Activated CD8-positive, alpha-beta T cell treated with anti-CD3 and anti-CD28 coated beads for 36 hours (primary cell): ENCODE measurements at regions of chr6 and their contacts with region 1.

Region 1: DNA sequence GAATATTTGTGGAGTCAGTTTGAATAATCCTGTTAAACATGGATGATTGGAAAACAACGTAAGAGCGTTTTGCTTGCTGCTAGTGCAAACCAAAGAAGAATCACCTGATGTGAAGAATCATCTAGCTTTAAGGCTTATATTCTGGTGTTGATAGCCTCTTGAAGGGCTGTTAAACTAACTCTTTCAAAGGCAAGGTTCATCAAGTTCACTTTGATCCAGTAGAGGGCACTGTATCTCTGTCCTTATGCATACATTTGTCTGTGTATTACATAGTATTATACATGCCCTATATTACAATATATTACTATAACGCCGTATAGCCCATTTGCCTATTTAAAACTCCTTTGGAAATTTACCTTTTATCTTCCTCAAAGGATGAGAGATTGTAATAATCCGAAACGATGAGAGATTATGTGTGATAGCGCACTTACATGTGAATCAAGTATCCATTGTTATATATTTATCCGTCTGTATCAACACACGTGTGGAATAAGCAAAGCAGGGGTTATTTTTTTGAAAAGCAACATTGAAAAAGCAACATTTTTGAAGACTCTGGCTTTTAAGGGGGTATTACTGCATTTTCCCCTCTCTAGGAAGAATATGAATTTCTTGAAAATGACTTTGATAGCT is 50.8 kb upstream of the NRN1 start:
- DNase-seq: no peak
- ATAC-seq: no peak
- H3K4me3 Mint-ChIP-seq: no peak overlapping the region
- H3K27ac Mint-ChIP-seq: no peak overlapping the region
- H3K4me1 Mint-ChIP-seq: no peaks in the 10 kb centered on the region
- H3K27me3 Mint-ChIP-seq: peaks cover 27% of the 10 kb centered on the region
- CTCF ChIP-seq: peak; percentile 58

Region 2: GRCh38 chr6:6105472-6106036 is 48.0 kb after region 1 on chr6:
- CTCF ChIA-PET with region 1: no interaction called
- POLR2A ChIA-PET with region 1: no interaction called
- intact Hi-C with region 1: no loop called
- DNase-seq: peak; percentile 9
- ATAC-seq: no peak
- H3K4me3 Mint-ChIP-seq: no peak overlapping the region
- H3K27ac Mint-ChIP-seq: no peak overlapping the region
- H3K4me1 Mint-ChIP-seq: no peaks in the 10 kb centered on the region
- H3K27me3 Mint-ChIP-seq: peaks cover 16% of the 10 kb centered on the region
- CTCF ChIP-seq: no peak

Region 3: DNA sequence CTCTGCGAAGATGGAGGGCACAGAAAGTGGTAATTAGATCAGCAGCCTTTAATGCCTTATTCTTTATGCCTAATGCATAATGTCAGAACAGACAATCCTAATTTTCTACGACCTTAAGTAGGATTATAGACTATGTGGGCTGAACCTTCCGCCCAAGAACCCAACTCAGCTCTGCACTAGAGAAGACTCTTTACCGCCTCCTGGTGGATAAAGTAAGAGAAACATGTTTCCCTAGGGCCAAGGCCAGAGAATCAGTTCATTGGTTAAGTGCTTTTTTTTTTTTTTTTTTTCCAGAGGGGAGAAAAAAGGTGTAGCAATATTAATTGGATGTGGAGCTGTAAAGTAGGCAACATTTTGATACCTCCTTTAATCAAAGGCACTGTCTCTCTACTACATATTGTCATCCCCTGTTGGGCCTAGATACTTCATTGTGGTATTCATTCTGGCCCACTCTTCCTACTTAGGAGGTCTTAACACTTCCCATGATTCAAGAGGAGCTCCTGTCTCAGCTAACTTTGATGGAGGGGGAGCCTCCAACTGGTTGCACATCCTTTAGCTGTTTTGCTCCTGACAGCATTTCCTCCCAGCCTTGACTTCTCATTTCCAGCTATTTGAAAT is 74.1 kb after region 1 on chr6:
- CTCF ChIA-PET with region 1: interaction called, 11 read pairs
- POLR2A ChIA-PET with region 1: no interaction called
- intact Hi-C with region 1: no loop called
- DNase-seq: peak; percentile 9
- ATAC-seq: no peak
- H3K4me3 Mint-ChIP-seq: no peak overlapping the region
- H3K27ac Mint-ChIP-seq: no peak overlapping the region
- H3K4me1 Mint-ChIP-seq: no peaks in the 10 kb centered on the region
- H3K27me3 Mint-ChIP-seq: peaks cover 3% of the 10 kb centered on the region
- CTCF ChIP-seq: peak; percentile 60